ENCODE measurements at regions of chr3 and their contacts with region 1.

Region 1: DNA sequence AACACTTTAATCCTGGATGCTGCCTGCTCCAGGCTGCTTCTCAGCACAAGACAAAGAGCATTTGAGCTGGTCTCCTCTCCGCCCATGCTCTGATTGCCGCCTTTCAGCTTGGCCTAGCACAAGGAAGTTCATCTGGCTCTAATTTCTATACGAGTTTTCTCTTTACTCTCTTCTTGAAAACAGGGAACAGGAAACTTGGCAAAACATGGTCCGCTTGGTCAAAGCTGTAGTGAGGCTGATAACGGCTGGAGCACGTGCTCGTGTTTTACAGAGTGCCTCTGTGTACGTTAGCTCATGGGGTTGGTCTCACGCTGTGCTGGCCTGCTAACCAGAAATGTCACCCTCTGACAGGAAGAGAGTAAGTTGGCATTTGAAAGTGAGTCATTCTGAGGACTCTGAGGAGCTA is 19.2 kb downstream of the RARRES1 start:
- DNase-seq: peak; percentile 99
- H3K4me3 ChIP-seq: no peak overlapping the region
- H3K27ac ChIP-seq: peak overlapping the region; percentile 59
- H3K4me1 ChIP-seq: peaks cover 47% of the 10 kb centered on the region
- H3K27me3 ChIP-seq: no peaks in the 10 kb centered on the region
- CTCF ChIP-seq: no peak
- POLR2A ChIP-seq: no peak

Region 2: GRCh38 chr3:158672293-158673176 is 40.6 kb before region 1 on chr3 and contains the start of gene LXN:
- CTCF ChIA-PET with region 1: interaction called, 9 read pairs
- POLR2A ChIA-PET with region 1: interaction called, 3 read pairs
- dilution Hi-C with region 1: no loop called
- intact Hi-C with region 1: loop called (anchors 2 kb)
- DNase-seq: peak; percentile 92
- H3K4me3 ChIP-seq: peak within 1 kb of the TSS; percentile 39 to 90 (median 79)
- H3K27ac ChIP-seq: peak within 1 kb of the TSS; percentile 75
- H3K4me1 ChIP-seq: peaks cover 29% of the 10 kb centered on the region
- H3K27me3 ChIP-seq: no peaks in the 10 kb centered on the region
- CTCF ChIP-seq: peak; percentile 56 to 92
- POLR2A ChIP-seq: peak; percentile 87
- total RNA-seq, gene LXN: 118 and 119 TPM in 2 replicates

Region 3: DNA sequence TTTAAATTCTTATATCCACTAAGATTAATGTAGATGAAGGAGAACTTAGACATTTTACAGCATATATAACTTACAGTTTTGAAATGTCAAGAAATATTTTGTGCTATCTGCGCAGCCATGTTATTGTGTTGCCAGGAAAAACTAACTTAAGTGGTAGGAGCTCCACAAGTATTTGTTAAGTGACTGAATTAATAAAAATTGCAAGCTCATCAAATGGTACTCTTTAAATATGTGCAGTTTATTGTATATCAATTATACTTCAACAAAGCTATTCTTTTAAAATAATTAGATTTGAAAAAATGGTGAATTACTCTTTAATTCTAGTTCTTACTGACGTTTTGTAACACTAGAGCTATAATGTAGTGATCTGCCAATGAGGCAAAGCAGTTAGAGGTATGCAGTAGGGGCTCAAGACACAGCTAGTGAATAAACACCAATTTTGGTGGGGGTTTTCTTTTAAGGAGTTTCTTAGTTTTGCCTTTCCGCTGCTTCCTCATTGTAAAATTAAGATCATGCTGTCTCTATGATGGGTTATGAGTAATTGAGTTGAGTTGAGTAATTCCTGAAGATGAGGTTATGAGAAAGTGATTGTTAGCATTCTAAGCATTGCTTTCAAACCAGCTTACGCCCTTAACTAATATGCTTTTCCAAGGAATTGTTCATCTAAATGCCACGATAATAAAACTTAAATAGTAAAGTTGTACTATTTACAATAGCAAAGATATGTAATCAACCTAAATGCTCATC is 29.7 kb before region 1 on chr3:
- CTCF ChIA-PET with region 1: no interaction called
- POLR2A ChIA-PET with region 1: no interaction called
- dilution Hi-C with region 1: no loop called
- intact Hi-C with region 1: no loop called
- DNase-seq: no peak
- H3K4me3 ChIP-seq: no peak overlapping the region
- H3K27ac ChIP-seq: no peak overlapping the region
- H3K4me1 ChIP-seq: peaks cover 17% of the 10 kb centered on the region
- H3K27me3 ChIP-seq: no peaks in the 10 kb centered on the region
- CTCF ChIP-seq: no peak
- POLR2A ChIP-seq: no peak

Region 4: GRCh38 chr3:158830391-158830790 is 117.3 kb after region 1 on chr3:
- CTCF ChIA-PET with region 1: no interaction called
- POLR2A ChIA-PET with region 1: no interaction called
- dilution Hi-C with region 1: no loop called
- intact Hi-C with region 1: no loop called
- DNase-seq: no peak
- H3K4me3 ChIP-seq: no peak overlapping the region
- H3K27ac ChIP-seq: no peak overlapping the region
- H3K4me1 ChIP-seq: no peaks in the 10 kb centered on the region
- H3K27me3 ChIP-seq: no peaks in the 10 kb centered on the region
- CTCF ChIP-seq: no peak
- POLR2A ChIP-seq: no peak

Measured in endothelial cell of umbilical vein (primary cell).